ENCODE measurements at regions of chr1 and their contacts with region 1.

Region 1: DNA sequence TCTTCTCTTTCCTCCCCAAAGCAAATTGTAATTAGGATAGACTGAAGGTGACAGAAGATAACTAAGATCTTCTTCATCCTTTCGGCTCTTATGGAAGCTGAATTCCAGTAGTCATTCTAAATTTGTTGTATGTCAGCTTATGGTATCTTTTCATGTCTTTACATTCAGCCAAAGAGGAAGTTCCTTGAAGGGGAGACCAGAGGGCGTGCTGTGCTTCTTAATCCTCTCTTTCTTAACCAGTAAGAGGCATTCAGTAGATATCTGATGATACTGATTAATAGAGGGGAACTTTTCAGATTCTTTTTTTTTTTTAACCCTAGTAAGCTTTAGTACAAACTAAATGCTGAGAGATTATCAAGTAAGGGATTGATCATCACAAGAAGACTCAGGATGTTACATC is 102.3 kb downstream of the OSBPL9 start:
- DNase-seq: no peak
- H3K4me3 ChIP-seq: no peak overlapping the region
- H3K4me3 Mint-ChIP-seq: no peak overlapping the region
- H3K27ac ChIP-seq: no peak overlapping the region
- H3K27ac Mint-ChIP-seq: no peak overlapping the region
- H3K4me1 ChIP-seq: peaks cover 2 to 4% of the 10 kb centered on the region in 2 donors
- H3K4me1 Mint-ChIP-seq: peaks cover 5% of the 10 kb centered on the region
- H3K27me3 ChIP-seq: no peaks in the 10 kb centered on the region
- H3K27me3 Mint-ChIP-seq: no peaks in the 10 kb centered on the region
- CTCF ChIP-seq: no peak

Region 2: GRCh38 chr1:51648180-51649109 is 70.7 kb before region 1 on chr1:
- intact Hi-C with region 1: loop called in 1 of 2 experiments (anchors 10 kb)
- DNase-seq: peak; percentile 40 to 62 (median 44)
- H3K4me3 ChIP-seq: no peak overlapping the region
- H3K4me3 Mint-ChIP-seq: no peak overlapping the region
- H3K27ac ChIP-seq: peak overlapping the region in 1 of 2 donors; percentile 30
- H3K27ac Mint-ChIP-seq: peak overlapping the region in 6 of 7 donors; percentile 41 to 84 (median 68)
- H3K4me1 ChIP-seq: peaks cover 16 to 23% of the 10 kb centered on the region in 2 donors
- H3K4me1 Mint-ChIP-seq: peaks cover 35% of the 10 kb centered on the region
- H3K27me3 ChIP-seq: no peaks in the 10 kb centered on the region
- H3K27me3 Mint-ChIP-seq: no peaks in the 10 kb centered on the region
- CTCF ChIP-seq: no peak

Measured in CD14-positive monocyte (primary cell).